AG04449 (cell line): ENCODE measurements at regions of chr15 and their contacts with region 1.

Region 1: GRCh38 chr15:28075573-28075972 is 23.5 kb downstream of the OCA2 start:
- DNase-seq: no peak
- H3K4me3 ChIP-seq: no peak overlapping the region
- CTCF ChIP-seq: no peak

Region 2: GRCh38 chr15:28086175-28086703 is 10.7 kb after region 1 on chr15:
- CTCF ChIA-PET with region 1: interaction called, 10 read pairs
- POLR2A ChIA-PET with region 1: no interaction called
- DNase-seq: no peak
- H3K4me3 ChIP-seq: no peak overlapping the region
- CTCF ChIP-seq: peak; percentile 81

Region 3: DNA sequence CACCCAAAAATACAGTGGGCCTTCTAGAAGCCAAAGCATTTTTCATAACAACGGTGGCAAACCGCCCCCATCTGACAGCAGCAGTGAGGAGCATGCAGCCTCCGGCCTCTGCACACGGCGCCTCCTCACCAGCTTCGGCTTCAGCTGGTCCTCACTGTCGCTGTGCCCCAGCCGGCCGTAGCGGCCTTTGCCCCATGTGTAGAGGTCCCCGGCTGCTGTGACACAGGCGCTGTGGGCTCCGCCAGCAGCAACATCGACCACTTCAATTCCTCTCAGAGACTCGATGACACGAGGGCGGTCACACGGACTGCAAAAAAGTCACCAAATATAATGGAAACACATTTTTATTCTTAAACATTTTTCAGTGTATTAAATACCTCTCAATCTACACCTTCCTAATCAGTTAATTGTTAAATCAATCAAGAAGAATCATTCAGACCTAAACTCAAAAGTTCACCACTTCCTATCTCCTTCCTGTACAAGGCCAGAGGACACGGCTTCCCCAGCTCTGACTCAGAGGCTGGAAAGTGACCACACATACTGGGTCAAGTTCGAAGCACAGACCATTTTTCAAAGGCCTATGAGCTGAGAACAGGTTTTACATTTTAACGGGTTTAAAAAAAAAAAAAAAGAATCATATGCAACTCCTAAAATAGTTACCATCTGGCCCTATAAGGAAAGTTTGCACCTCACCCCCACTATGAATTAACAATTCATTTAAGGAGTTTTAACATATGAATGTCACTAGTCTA is 57.1 kb after region 1 on chr15:
- CTCF ChIA-PET with region 1: no interaction called
- POLR2A ChIA-PET with region 1: no interaction called
- DNase-seq: no peak
- H3K4me3 ChIP-seq: no peak overlapping the region
- CTCF ChIP-seq: no peak

Region 4: DNA sequence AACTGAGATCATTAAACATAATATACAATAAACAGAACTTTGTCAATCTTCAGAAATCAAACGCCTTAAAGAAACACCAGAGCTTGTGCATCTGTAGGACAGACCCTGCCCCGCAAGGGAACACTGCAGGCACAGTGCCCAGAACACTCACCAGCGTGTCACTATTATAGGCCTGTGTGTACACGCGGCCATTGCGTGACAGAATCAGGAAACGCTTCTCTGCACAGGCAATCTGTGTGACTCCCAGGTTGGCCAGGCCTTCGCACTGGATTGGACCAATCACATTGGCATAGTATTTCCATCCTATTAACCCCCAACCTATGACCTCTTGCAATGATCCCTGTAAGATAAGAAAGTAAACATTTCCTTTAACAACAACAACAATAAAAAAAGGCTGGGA is 193.5 kb after region 1 on chr15:
- CTCF ChIA-PET with region 1: no interaction called
- POLR2A ChIA-PET with region 1: no interaction called
- DNase-seq: no peak
- H3K4me3 ChIP-seq: no peak overlapping the region
- CTCF ChIP-seq: no peak